Activated naive CD4-positive, alpha-beta T cell treated with anti-CD3 and anti-CD28 coated beads for 36 hours (primary cell): ENCODE measurements at regions of chr10 and their contacts with region 1.

Region 1: DNA sequence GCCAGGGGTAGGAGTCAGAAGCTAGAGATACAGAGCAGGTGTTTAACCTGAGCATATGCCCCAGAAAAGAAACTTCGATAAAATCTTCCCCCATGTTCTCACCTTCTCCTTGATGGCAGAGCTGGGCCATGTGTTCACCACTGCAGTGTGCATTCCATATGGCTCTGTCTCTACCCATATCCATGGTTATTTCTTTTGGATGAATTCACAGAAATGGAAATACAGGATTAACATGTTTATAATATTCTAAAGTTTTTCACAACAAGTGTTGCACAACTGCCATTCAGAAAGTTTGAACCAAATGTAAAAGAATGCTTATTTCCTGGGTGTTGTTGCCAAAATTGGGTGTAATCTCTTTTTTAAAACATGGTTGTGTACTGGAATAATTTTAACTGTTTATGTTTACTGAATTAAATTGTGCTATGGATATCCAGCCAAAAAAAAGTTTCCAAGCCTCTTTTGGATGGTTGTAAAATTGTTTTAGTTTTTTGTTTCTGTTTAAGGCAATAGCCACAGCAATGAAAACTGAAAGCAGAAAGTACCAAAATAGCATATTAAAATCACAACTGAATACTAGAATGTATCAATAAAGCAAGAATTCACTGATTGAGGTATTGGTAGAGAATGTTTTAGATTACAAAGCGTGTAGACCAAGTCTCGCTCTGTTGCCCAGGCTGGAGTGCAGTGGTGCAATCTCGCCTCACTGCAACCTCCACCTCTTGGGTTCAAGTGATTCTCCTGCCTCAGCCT is 19.9 kb upstream of the CCNY start:
- DNase-seq: no peak
- H3K4me3 Mint-ChIP-seq: no peak overlapping the region
- H3K27ac Mint-ChIP-seq: no peak overlapping the region
- H3K4me1 Mint-ChIP-seq: peaks cover 2% of the 10 kb centered on the region
- H3K27me3 Mint-ChIP-seq: no peaks in the 10 kb centered on the region

Region 2: GRCh38 chr10:34743814-34744213 is 572.6 kb before region 1 on chr10:
- CTCF ChIA-PET with region 1: no interaction called
- intact Hi-C with region 1: no loop called
- DNase-seq: no peak
- H3K4me3 Mint-ChIP-seq: no peak overlapping the region
- H3K27ac Mint-ChIP-seq: no peak overlapping the region
- H3K4me1 Mint-ChIP-seq: no peaks in the 10 kb centered on the region
- H3K27me3 Mint-ChIP-seq: peaks cover 27% of the 10 kb centered on the region

Region 3: GRCh38 chr10:34996843-34997242 is 319.6 kb before region 1 on chr10:
- CTCF ChIA-PET with region 1: no interaction called
- intact Hi-C with region 1: no loop called
- DNase-seq: no peak
- H3K4me3 Mint-ChIP-seq: no peak overlapping the region
- H3K27ac Mint-ChIP-seq: no peak overlapping the region
- H3K4me1 Mint-ChIP-seq: peaks cover 18% of the 10 kb centered on the region
- H3K27me3 Mint-ChIP-seq: no peaks in the 10 kb centered on the region

Region 4: DNA sequence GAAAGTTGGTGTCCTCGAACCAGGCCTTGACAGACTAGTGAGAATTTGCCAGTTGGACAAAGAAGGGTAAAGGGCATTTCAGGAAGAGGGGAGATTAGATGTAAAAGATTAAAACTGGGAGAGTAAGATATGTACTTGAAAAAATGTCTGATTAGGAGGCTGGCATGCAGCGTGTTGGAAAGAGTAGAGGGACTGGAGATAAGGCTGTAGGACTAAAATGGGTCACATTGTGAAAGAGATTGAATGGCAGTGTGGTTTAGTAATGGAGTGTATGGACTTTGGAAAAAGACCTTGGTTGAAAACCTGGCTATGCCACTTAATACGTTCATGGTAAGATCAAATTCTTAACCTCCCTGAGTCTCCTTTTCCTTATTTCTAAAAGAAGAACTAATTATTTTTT is 175.7 kb before region 1 on chr10:
- CTCF ChIA-PET with region 1: no interaction called
- intact Hi-C with region 1: no loop called
- DNase-seq: no peak
- H3K4me3 Mint-ChIP-seq: no peak overlapping the region
- H3K27ac Mint-ChIP-seq: no peak overlapping the region
- H3K4me1 Mint-ChIP-seq: peaks cover 11% of the 10 kb centered on the region
- H3K27me3 Mint-ChIP-seq: no peaks in the 10 kb centered on the region

Region 5: DNA sequence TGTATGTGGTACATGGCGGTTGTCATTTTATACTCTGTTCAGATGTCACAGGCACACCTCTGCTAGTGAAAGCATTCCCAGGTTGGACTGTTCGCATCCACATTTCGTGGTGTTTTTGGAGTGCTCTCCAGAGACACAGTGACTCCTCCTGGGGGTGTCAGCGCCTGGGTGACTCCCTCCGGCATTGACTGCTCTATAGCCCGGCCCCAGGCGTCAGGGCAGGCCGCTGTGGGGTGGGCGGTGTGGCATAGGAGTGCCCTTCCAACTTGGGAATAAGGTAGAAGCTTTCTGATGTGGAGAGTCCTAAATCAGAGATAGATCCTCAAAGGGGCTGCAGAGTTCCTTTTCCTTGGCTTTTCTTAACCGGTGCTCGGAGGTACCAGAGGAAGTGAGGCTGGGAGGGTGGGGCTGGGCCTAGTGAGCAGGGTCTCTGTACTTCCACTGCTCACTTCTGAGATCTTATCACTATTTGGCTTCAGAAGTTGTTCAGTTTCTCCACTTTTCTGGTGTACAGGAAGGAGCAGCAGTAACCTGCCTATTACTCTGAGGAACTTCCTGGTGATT is 52.2 kb after region 1 on chr10:
- CTCF ChIA-PET with region 1: interaction called, 10 read pairs
- intact Hi-C with region 1: no loop called
- DNase-seq: no peak
- H3K4me3 Mint-ChIP-seq: no peak overlapping the region
- H3K27ac Mint-ChIP-seq: no peak overlapping the region
- H3K4me1 Mint-ChIP-seq: peaks cover 69% of the 10 kb centered on the region
- H3K27me3 Mint-ChIP-seq: no peaks in the 10 kb centered on the region

Region 6: GRCh38 chr10:35387768-35388167 is 71.4 kb after region 1 on chr10:
- CTCF ChIA-PET with region 1: no interaction called
- intact Hi-C with region 1: no loop called
- DNase-seq: no peak
- H3K4me3 Mint-ChIP-seq: no peak overlapping the region
- H3K27ac Mint-ChIP-seq: no peak overlapping the region
- H3K4me1 Mint-ChIP-seq: peaks cover 51% of the 10 kb centered on the region
- H3K27me3 Mint-ChIP-seq: no peaks in the 10 kb centered on the region